K562 (cell line): ENCODE measurements at regions of chr7 and their contacts with region 1.

Region 1: DNA sequence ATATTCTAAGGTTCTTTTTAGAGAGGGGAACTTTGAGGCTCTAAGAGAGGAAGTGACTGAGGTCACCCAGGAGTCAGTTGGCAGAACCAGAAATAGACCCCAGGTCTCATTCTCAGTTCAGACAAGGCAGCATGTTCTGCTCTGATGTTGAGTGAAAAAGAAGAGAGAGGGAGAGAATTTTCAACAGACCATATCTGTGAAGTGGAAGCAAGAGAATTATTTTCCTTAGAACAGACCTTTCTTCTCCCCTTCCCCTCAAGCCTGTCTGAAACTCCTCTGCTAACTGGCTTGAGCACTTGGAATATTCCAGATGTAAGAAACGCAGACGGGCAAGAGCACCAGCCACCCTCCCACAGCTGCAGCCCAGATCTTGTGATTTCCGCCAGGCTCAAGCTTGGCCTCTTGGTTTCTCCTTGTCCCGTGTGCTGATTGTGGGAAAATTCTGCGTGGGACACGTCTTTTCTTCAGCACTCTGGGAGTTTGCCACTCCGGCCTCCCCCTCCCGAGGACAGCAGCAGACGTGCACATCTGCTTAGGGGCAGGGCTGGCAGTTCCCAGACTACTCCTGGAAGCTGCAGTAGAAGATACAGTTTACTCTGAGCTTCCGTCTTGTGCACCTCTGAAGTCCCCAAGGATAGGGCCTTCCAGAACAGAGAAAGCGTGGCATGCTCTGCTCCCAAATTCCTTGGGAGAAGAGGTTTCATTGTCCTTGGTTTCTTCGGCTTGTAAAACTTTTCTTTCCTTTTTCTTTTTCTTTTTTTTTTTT is 22.7 kb upstream of the IKZF1 start:
- DNase-seq: no peak
- ATAC-seq: no peak; the same call in 2 of the 3 replicates
- H3K4me3 ChIP-seq: no peak overlapping the region
- H3K27ac ChIP-seq: no peak overlapping the region
- H3K4me1 ChIP-seq: peaks cover 10 to 23% of the 10 kb centered on the region in 2 experiments; a peak in 4 of 5 replicates
- H3K27me3 ChIP-seq: no peaks in the 10 kb centered on the region
- CTCF ChIP-seq: no peak
- EP300 ChIP-seq: no peak
- POLR2A ChIP-seq: no peak
- RAD21 ChIP-seq: no peak

Region 2: GRCh38 chr7:50298811-50299562 is 17.1 kb after region 1 on chr7:
- CTCF ChIA-PET with region 1: no interaction called
- POLR2A ChIA-PET with region 1: interaction called, 10 read pairs
- in situ Hi-C with region 1: no loop called
- intact Hi-C with region 1: no loop called
- DNase-seq: no peak
- ATAC-seq: no peak
- H3K4me3 ChIP-seq: no peak overlapping the region
- H3K27ac ChIP-seq: no peak overlapping the region
- H3K4me1 ChIP-seq: peaks cover 0 to 12% of the 10 kb centered on the region in 2 experiments; a peak in 3 of 5 replicates
- H3K27me3 ChIP-seq: no peaks in the 10 kb centered on the region
- CTCF ChIP-seq: no peak
- EP300 ChIP-seq: no peak
- POLR2A ChIP-seq: no peak
- RAD21 ChIP-seq: no peak

Region 3: GRCh38 chr7:50502001-50502684 is 220.3 kb after region 1 on chr7:
- CTCF ChIA-PET with region 1: no interaction called
- POLR2A ChIA-PET with region 1: no interaction called
- in situ Hi-C with region 1: no loop called
- intact Hi-C with region 1: no loop called
- DNase-seq: peak in 1 of 4 experiments; percentile 32
- ATAC-seq: peak; percentile 71
- H3K4me3 ChIP-seq: no peak overlapping the region
- H3K27ac ChIP-seq: no peak overlapping the region
- H3K4me1 ChIP-seq: peaks cover 0 to 9% of the 10 kb centered on the region in 2 experiments; a peak in 3 of 5 replicates
- H3K27me3 ChIP-seq: peaks cover 0 to 19% of the 10 kb centered on the region in 2 experiments; a peak in 1 of 5 replicates
- CTCF ChIP-seq: no peak
- EP300 ChIP-seq: no peak
- POLR2A ChIP-seq: no peak
- RAD21 ChIP-seq: no peak

Region 4: DNA sequence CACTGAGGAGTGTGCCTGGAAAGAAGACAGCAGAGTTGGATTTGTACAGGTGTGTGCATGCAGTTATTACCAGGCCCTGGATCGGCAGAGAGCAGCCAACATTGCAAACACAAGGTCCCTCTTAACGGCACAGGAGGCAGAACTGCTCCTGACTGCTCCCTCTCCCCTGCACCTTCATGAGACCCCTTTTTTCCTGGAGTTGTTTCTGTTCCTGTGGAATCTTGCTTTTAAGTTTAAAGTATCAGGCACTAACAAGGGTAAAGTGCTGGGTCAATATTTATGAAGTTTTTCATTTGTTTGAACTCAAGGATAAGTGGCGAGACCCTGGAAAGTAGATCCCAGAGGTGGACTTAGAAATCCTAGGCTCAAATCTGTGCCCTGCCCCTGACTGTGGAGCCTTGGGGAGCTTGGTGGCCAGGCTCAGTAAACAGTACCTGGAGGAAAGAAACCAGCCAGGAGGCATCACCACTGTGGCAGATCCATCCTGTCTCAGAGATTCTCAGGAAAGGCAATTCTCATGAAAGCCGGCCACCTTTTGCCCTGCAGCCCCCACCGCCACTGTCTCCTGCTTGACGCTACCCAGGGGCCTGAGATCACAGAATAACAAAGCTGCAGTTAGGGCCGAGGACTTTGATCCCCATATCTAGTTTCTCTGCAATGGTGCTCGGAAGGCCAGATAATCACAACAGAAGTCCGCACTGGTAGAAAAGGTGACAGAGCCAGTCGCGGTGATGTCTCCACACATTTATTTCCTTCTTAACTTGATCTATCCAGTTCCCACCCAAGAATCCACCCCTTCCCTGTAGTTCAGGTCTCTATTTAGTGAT is 246.6 kb after region 1 on chr7:
- CTCF ChIA-PET with region 1: no interaction called
- POLR2A ChIA-PET with region 1: no interaction called
- in situ Hi-C with region 1: no loop called
- intact Hi-C with region 1: no loop called
- DNase-seq: no peak
- ATAC-seq: no peak; the same call in 2 of the 3 replicates
- H3K4me3 ChIP-seq: no peak overlapping the region
- H3K27ac ChIP-seq: no peak overlapping the region
- H3K4me1 ChIP-seq: peaks cover 0 to 4% of the 10 kb centered on the region in 2 experiments; a peak in 3 of 5 replicates
- H3K27me3 ChIP-seq: peaks cover 0 to 12% of the 10 kb centered on the region in 2 experiments; a peak in 1 of 5 replicates
- CTCF ChIP-seq: no peak
- EP300 ChIP-seq: no peak
- POLR2A ChIP-seq: no peak
- RAD21 ChIP-seq: no peak